Thyroid gland (tissue), 4 donors: ENCODE measurements at regions of chr7 and their contacts with region 1.

Region 1: GRCh38 chr7:106461993-106462859 is 177.4 kb upstream of the NAMPT start:
- DNase-seq: no peak
- H3K4me3 ChIP-seq: no peak overlapping the region
- H3K27ac ChIP-seq: no peak overlapping the region
- H3K4me1 ChIP-seq: no peaks in the 10 kb centered on the region
- H3K27me3 ChIP-seq: no peaks in the 10 kb centered on the region
- CTCF ChIP-seq: peak; percentile 13 to 73 (median 48)
- POLR2A ChIP-seq: no peak

Region 2: DNA sequence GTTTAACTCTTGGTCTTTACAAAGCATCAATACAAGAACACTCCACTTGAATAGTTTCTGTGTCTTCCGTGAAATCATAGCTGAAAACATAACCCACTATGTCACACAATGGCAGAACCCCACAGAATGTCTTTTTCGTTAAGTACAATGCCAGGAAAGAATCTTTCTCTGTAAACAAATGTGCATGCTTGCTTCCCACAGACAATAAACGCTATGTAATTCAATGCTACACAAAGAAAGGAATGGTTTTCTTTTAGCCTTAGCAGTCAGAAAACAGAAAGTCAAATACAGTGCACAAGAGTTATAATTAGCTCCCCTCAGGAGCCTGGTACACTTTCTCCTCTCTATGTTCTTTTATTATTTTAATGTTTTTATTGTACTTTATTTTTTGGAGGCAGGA is 1259.6 kb before region 1 on chr7:
- intact Hi-C with region 1: no loop called
- DNase-seq: no peak
- H3K4me3 ChIP-seq: no peak overlapping the region
- H3K27ac ChIP-seq: no peak overlapping the region
- H3K4me1 ChIP-seq: peaks cover 0 to 5% of the 10 kb centered on the region in 2 donors
- H3K27me3 ChIP-seq: no peaks in the 10 kb centered on the region
- CTCF ChIP-seq: no peak
- POLR2A ChIP-seq: no peak

Region 3: DNA sequence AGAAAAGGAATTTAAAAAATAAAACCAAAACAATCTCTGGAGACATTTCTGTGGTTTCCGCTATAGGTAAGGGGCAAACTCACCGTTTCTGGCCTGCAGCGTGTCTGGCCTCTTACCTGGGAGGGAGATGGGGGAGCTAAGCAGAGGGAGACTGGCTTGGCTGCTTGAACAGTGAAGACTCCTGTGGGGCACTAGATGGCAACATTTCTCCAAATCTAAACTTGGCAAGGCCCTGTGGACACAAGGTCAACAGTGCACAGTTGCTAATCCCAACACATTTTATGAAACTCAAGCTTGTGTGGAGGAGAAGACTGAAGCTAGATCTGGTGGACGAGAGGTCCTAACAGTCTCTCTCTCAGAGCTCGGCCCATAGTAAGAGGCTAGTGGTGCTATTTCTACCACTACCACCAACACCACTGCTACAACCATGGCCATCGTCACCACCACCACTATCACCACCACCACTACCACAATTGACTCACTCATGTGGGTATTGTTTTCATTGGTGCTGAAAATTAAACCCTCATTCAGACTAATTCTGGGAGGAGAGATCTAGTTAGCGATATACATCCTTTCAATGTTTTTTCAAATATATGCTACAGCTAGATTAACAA is 527.5 kb before region 1 on chr7:
- intact Hi-C with region 1: no loop called
- DNase-seq: peak; percentile 72 to 75
- H3K4me3 ChIP-seq: no peak overlapping the region
- H3K27ac ChIP-seq: peak overlapping the region; percentile 49 to 76 (median 75)
- H3K4me1 ChIP-seq: peaks cover 20 to 35% of the 10 kb centered on the region in 2 donors
- H3K27me3 ChIP-seq: no peaks in the 10 kb centered on the region
- CTCF ChIP-seq: peak in 5 of 6 experiments; percentile 30 to 92 (median 81)
- POLR2A ChIP-seq: peak in 1 of 2 donors; percentile 16

Region 4: GRCh38 chr7:106056513-106057203 is 405.6 kb before region 1 on chr7:
- intact Hi-C with region 1: no loop called
- DNase-seq: peak; percentile 74 to 81
- H3K4me3 ChIP-seq: no peak overlapping the region
- H3K27ac ChIP-seq: no peak overlapping the region
- H3K4me1 ChIP-seq: peaks cover 18 to 22% of the 10 kb centered on the region in 2 donors
- H3K27me3 ChIP-seq: no peaks in the 10 kb centered on the region
- CTCF ChIP-seq: peak; percentile 64 to 96 (median 88)
- POLR2A ChIP-seq: no peak

Region 5: DNA sequence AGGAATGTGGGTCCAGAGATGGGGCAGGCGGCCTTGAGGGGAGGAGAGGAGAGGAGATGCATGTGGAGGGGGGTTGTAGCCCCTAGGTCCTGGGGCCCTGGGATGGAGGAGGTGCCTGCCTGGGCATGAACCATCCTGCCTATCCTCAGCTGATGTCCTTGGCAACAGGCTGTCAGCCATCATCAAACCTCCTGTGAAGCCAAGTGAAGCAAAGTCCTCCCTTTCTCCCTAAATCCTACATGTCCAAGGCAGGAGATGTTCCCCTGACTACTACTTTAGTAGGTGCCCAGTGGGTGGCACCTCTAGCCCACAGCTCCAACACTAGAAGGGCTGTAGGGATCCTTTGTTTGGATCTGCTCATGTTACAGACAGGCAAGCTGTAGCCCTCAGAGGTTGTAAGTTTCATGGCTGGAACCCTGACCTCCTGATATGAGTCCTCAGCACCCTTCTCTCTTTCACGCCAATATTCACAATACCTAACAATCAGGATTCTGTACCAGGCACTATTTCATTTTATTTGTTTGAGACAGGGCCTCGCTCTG is 283.6 kb before region 1 on chr7:
- intact Hi-C with region 1: loop called (anchors 2 kb)
- DNase-seq: no peak
- H3K4me3 ChIP-seq: no peak overlapping the region
- H3K27ac ChIP-seq: no peak overlapping the region
- H3K4me1 ChIP-seq: peaks cover 3 to 20% of the 10 kb centered on the region in 2 donors
- H3K27me3 ChIP-seq: no peaks in the 10 kb centered on the region
- CTCF ChIP-seq: no peak
- POLR2A ChIP-seq: no peak